Cardiac septum (tissue), 1 donor: ENCODE measurements at regions of chr12 and their contacts with region 1.

Region 1: GRCh38 chr12:108562348-108563135 is at the start of gene ISCU:
- DNase-seq: peak; percentile 99
- total RNA-seq, gene ISCU: 432 TPM

Region 2: DNA sequence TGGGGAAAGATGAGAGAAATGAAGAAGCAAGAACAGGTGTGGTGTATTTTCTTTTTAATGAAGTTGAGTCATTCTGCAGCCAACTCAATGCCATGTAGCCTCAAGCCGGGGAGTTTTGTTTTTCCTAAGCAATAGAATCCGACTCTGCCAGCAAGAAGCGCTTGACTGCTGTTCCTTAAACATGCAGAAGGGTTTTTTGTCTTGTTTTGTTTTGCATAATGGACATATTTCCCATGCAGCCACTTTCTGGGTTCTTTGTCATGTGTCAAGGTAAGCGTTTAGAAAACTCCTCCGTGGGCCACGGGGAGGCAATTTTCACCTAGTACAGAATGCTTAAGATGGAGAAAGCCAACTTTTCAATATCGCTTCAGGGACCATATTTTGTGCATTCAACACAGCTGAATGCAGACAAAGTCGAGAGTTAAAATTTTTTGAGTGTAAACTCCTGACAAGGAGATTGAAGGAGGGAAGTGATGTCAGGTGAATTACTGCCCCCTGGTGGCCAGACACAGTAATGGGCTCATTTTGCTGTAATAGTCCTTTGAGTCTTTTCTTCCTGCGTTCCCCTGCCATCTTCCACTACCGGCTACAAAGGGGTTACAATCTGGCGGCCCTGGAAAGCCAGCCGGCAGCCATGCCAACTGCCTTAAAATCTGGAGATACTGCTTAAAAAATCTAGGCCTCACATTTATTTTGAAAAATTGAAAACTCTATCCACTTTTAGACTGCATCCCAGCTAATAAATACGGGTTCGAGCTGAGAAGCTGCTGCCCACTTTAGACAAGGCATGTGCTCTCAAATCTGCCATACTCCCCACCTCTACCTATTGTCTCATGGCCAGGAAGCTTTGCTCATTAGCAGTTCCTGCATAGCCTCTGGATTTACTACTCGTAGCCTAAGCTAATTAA is 50.7 kb before region 1 on chr12:
- intact Hi-C with region 1: no loop called
- DNase-seq: no peak

Region 3: DNA sequence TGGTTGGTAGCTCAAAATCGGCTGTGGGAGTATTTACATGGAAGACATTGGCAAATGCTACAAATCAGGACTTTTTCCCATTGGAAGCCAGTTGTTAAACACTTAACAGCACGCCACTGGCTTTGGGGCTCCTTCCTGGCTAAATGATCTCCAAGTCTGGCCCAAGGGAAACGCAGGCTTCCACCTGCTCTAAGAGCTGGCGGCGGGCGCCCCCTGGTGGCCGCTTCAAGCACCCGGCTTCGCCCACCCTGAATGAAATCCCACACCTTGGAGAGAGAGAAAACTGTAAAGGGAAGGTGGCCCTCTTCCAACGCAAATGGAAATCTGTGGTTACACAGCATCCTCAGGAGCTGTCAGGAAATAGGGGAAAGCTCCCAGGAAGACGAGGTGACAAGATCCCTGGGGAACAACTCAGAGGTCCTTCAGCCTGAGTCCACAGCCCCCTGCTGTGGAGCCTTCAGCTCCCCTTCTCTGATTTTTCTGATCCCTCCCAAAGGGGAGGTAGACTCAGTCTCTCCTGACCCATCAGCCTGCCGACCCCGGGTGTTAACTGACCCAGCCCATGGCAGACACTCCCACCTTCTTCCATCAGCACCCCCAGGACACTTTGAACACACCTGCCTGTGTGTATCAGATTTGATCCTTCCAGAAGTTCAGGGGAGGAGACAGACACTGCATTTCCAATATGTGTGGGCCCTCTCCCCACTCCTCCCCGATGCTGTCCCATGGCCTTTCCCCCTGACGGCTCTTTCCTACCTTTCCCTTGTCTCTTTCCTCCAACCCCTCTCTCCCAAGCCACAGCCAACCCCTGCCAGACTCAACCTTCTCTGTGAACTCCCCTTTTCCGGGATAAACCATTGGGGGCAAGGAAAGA is 55.8 kb after region 1 on chr12:
- intact Hi-C with region 1: loop called (anchors 1 kb)
- DNase-seq: peak; percentile 88

Region 4: GRCh38 chr12:109093022-109093918 is 530.7 kb after region 1 on chr12 and contains the start of gene ALKBH2:
- intact Hi-C with region 1: loop called (anchors 2 kb)
- DNase-seq: peak; percentile 97
- total RNA-seq, gene ALKBH2: 9.7 TPM